Activated CD8-positive, alpha-beta memory T cell treated with anti-CD3 and anti-CD28 coated beads, Interleukin-2, amount 10 ng/mL, durations not matched to agents 7 days and 5 days (primary cell): ENCODE measurements at regions of chr6 and their contacts with region 1.

Region 1: DNA sequence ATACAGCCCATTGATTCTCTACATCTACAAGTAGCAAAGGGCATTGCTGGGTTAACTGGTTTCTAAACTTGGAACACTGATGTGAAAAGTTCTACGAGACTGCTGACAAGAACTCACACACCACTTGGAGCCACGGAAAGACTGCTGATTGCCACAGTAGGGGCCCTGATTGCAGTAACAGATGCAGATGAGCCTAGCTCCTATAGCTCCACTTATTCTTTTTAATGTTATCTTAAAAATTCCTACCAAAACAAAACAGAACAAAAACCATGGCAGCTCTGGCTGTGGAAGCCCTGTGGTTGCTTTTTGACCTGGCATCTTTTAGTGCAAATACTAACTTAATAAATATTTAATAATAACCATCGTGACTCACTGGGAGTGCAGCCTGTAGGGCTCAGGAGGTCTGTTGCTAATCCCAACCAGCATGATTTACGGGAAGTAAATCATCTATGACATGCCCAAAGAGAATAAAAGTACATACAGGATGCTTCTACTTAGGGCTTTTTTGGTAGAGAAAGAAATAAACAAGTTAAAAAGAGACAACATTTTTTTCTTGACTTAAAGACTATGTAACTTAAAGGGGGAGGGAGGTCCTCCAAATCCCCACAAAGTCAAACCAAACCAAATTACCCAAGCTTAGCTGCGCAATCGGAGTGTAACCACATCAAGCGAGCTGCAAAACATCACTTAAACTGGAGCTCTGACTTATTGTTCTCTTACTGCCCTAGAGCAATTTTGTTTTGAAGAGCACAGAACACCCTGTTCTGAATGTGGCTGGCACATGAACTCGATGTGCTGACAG is 87.2 kb downstream of the FKBP5 start:
- DNase-seq: peak; percentile 67
- ATAC-seq: peak; percentile 76
- H3K4me3 Mint-ChIP-seq: peak overlapping the region; percentile 62
- H3K27ac Mint-ChIP-seq: peak overlapping the region; percentile 80
- H3K4me1 Mint-ChIP-seq: peaks cover 47% of the 10 kb centered on the region
- H3K27me3 Mint-ChIP-seq: no peaks in the 10 kb centered on the region

Region 2: DNA sequence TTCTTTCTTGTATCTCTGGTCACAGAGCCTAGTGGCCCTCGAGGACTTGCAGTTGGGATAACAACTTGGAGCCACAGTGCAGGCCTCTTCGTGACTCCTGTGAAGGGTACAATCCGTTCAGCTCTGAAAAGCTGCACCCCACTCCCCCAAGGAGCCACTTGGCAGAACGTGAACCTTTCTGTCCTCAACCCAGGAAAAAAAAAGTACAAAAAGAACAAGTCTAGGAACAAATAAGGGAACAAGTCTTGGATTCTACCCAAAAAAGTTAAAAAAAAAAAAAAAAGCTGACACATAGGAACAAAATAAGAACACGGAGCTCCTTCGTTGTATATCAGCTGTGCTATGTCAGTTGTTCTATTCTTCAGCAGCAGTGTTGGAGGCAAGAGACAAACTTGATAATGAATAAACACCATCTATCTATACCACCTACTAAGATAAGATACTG is 10.9 kb before region 1 on chr6:
- CTCF ChIA-PET with region 1: interaction called, 21 read pairs
- DNase-seq: no peak
- ATAC-seq: no peak
- H3K4me3 Mint-ChIP-seq: no peak overlapping the region
- H3K27ac Mint-ChIP-seq: no peak overlapping the region
- H3K4me1 Mint-ChIP-seq: peaks cover 25% of the 10 kb centered on the region
- H3K27me3 Mint-ChIP-seq: no peaks in the 10 kb centered on the region